ENCODE measurements at regions of chr5 and their contacts with region 1.

Region 1: GRCh38 chr5:141968914-141969608 is at the start of gene RNF14:
- DNase-seq: peak; percentile 89 to 91
- H3K4me3 ChIP-seq: peak within 1 kb of the TSS; percentile 73 to 87 (median 78)
- H3K27ac ChIP-seq: peak within 1 kb of the TSS; percentile 97 to 98
- H3K4me1 ChIP-seq: peaks cover 0 to 10% of the 10 kb centered on the region in 2 donors
- H3K27me3 ChIP-seq: no peaks in the 10 kb centered on the region
- CTCF ChIP-seq: peak; percentile 87 to 98 (median 95)
- POLR2A ChIP-seq: peak; percentile 73
- total RNA-seq, gene RNF14: 43.9 to 80.2 (median 60.6) TPM

Region 2: GRCh38 chr5:141691867-141692532 is 277.1 kb before region 1 on chr5:
- intact Hi-C with region 1: loop called (anchors 10 kb)
- DNase-seq: peak; percentile 71 to 88
- H3K4me3 ChIP-seq: peak overlapping the region in 2 of 3 donors; percentile 41 to 62
- H3K27ac ChIP-seq: no peak overlapping the region
- H3K4me1 ChIP-seq: peaks cover 0 to 4% of the 10 kb centered on the region in 2 donors
- H3K27me3 ChIP-seq: no peaks in the 10 kb centered on the region
- CTCF ChIP-seq: peak; percentile 96 to 99 (median 98)
- POLR2A ChIP-seq: no peak

Region 3: DNA sequence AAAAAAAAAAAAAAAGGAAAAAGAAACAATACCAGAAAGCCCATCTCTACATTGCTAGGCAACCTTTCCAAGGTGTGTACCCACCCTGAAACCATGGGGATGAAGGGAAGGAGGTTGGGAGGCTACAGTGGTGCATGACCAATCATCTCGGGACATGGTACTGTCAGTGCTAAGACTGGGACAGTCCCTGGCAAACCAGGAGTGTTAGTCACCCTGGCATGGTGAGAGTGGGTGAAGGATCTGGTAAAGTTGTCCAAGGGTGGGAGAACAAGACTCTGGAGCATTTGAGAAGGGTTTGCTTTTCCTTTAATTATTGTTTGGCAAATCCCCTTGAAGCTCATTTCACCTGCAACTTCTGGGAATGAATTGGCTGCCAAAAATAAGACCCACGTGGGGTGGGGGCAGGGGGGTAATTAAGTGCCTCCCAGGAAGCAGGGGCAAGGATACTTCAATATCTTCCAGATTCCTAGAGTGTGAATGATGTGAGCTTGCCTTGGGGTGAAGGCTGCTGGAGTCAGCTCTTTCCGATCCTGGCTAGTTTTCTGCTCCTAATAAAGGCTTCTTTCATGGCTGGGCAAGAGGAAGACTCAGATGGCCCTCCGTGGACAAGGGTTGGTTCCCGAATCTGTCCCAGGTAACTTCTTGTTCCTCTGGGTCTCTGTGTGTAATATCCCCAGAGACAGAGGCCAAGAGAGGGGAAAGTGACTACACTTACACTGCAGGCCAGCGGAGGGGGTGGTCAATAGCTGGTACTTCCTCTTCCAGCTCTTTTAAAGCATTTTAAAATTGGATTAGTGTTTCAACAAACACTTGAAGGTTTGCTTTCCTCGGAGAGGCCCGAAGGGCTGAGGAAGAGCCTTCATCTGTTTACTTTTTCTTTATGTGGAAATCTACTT is 417.3 kb after region 1 on chr5:
- intact Hi-C with region 1: loop called (anchors 5 kb)
- DNase-seq: no peak
- H3K4me3 ChIP-seq: no peak overlapping the region
- H3K27ac ChIP-seq: peak overlapping the region; percentile 62 to 69
- H3K4me1 ChIP-seq: peaks cover 0 to 8% of the 10 kb centered on the region in 2 donors
- H3K27me3 ChIP-seq: no peaks in the 10 kb centered on the region
- CTCF ChIP-seq: no peak
- POLR2A ChIP-seq: no peak

Region 4: GRCh38 chr5:142938266-142938880 is 969.3 kb after region 1 on chr5:
- intact Hi-C with region 1: no loop called
- DNase-seq: no peak
- H3K4me3 ChIP-seq: no peak overlapping the region
- H3K27ac ChIP-seq: no peak overlapping the region
- H3K4me1 ChIP-seq: no peaks in the 10 kb centered on the region
- H3K27me3 ChIP-seq: no peaks in the 10 kb centered on the region
- CTCF ChIP-seq: no peak
- POLR2A ChIP-seq: no peak